ENCODE measurements at regions of chr2 and their contacts with region 1.

Region 1: GRCh38 chr2:176126929-176127773 is 2.4 kb upstream of the HOXD8 start:
- DNase-seq: peak; percentile 61
- H3K4me3 Mint-ChIP-seq: no peak overlapping the region
- H3K27ac Mint-ChIP-seq: no peak overlapping the region
- H3K4me1 Mint-ChIP-seq: peaks cover 16% of the 10 kb centered on the region
- H3K27me3 Mint-ChIP-seq: peaks cover 74% of the 10 kb centered on the region

Region 2: DNA sequence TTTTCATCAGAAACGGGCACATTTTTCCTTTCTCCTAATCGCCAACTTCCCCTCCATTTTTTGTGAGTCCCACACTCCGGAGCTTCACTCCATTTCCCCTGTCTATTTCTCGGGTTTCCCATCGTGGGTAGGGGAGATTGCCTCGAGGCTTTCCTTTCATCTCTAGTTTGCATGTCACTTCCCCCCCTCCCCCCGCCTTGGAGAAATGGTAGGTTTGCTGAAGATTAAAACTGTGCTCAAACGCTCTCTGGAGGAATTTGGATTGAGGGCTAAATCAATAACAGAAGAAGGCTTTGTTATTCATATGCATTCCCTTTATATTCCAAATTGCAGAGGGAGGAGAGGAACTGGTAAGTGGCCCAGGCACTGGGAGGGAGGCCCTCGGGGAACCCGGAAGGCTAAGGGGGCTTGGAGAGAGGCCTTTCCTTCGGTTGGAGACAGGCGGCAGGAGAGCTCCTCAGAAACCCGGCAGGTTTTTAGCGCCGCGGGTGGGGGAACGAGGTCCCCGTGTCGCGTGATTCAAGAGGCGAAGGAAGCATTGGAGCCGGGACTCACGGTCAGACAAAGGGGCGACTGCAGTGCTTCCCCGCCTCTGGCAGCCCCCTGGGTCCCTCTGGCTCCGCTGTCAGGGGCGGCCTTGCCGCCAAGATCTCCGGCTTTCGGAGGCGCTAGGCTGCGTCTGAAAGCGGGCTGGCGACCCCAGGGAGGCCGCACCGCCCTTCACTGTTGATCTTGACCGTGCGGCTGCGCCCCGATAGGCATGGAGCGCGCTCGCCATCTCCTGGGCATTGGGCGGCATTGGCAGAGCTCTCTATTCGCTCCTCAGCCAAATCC is 29.9 kb before region 1 on chr2:
- CTCF ChIA-PET with region 1: interaction called, 19 read pairs
- POLR2A ChIA-PET with region 1: no interaction called
- DNase-seq: peak; percentile 64
- H3K4me3 Mint-ChIP-seq: peak overlapping the region; percentile 60
- H3K27ac Mint-ChIP-seq: no peak overlapping the region
- H3K4me1 Mint-ChIP-seq: peaks cover 17% of the 10 kb centered on the region
- H3K27me3 Mint-ChIP-seq: peaks cover 88% of the 10 kb centered on the region

Region 3: DNA sequence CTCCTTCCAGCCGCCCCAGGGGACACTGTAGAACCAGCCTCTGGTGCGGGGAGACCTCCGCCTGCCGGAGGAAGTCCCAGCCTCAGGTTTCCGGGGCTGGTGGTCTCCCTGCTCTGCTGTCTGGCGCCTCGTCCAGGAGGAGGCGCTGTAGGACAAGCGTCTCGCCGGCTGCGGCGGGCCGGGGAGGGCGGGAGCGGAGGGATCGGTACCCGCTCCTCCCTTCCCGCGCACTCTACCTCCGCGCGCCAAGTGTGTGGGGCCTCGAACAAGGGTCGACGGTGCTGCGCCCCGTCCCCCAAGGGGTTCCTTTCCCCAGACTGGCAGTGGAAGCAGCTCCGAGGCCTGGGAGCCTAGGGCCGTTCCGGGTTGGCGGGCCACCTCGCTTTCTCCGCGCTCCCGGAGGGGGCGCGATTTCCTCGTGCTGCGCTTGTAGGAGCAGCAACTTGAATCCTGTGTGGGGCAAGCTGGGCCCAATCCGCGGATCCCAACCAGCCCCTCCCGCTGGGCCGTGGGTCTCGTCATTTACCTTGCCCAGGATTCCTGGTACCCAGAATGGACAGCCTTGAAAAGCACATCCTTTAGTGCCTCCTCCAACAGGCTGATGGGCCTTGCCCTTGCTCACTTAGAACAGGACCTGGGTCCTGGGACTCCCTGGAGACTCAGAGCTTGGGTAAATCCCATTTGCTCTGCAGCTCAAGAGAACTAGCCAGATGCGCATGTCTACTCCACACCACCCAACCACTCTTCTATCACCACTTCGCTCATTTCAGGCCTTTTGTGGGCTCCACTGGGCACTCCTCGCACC is 13.6 kb after region 1 on chr2:
- CTCF ChIA-PET with region 1: interaction called, 10 read pairs
- POLR2A ChIA-PET with region 1: no interaction called
- DNase-seq: peak; percentile 70
- H3K4me3 Mint-ChIP-seq: peak overlapping the region; percentile 9
- H3K27ac Mint-ChIP-seq: no peak overlapping the region
- H3K4me1 Mint-ChIP-seq: peaks cover 22% of the 10 kb centered on the region
- H3K27me3 Mint-ChIP-seq: peaks cover 74% of the 10 kb centered on the region

Region 4: DNA sequence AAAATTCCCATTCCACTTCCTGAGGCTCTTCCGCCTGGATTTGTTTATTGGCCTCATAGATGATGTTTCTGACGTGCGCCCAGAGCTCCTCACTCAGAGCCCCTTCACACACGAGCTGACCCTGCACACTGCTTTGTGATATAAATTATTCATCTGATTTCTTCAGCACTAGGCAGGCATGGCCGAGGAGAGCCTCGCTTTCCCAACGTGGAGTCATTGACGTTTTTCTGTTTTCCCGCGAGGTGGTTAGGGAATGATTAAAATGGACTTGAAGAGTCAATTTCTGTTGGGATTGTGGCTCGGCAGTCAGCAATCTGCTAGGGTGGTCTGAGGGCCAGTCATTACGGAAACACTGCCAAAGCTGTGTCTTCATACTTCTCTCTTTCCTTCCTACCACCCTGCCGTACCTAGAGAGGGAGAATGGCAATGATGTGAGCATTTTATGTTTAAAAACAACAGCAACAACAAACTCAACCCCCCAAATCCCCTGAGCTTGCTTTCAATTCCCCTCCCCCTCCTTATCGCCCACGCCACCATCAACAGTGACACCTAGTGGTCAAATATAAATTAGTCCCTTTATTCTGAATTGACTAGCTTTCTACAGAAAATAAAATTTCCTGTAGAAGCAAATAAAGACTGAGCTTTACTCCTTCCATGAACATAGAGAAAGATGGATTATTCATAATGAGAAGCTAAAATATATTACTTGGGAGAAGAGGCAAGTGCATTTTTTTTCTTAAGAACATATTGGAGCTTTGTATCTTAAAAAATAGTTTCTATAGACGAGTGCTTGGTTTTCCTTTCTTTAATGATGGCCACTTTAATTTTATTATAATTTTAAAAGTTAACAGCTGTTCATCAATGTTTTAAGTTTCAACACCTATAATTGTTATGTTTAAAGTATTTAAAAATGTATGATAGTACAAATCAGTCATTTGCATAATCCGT is 427.2 kb after region 1 on chr2:
- CTCF ChIA-PET with region 1: interaction called, 11 read pairs
- POLR2A ChIA-PET with region 1: no interaction called
- DNase-seq: peak; percentile 23
- H3K4me3 Mint-ChIP-seq: peak overlapping the region; percentile 48
- H3K27ac Mint-ChIP-seq: no peak overlapping the region
- H3K4me1 Mint-ChIP-seq: peaks cover 12% of the 10 kb centered on the region
- H3K27me3 Mint-ChIP-seq: peaks cover 47% of the 10 kb centered on the region

Region 5: GRCh38 chr2:176638167-176639015 is 511.2 kb after region 1 on chr2:
- CTCF ChIA-PET with region 1: interaction called, 12 read pairs
- POLR2A ChIA-PET with region 1: no interaction called
- DNase-seq: peak; percentile 61
- H3K4me3 Mint-ChIP-seq: peak overlapping the region; percentile 51
- H3K27ac Mint-ChIP-seq: no peak overlapping the region
- H3K4me1 Mint-ChIP-seq: peaks cover 1% of the 10 kb centered on the region
- H3K27me3 Mint-ChIP-seq: peaks cover 63% of the 10 kb centered on the region

Measured in activated CD4-positive, alpha-beta memory T cell treated with anti-CD3 and anti-CD28 coated beads, Interleukin-2, amount 10 ng/mL, durations not matched to agents 7 days and 5 days (primary cell).